ENCODE measurements at regions of chr1 and their contacts with region 1.

Region 1: GRCh38 chr1:184734980-184735379 is 19.7 kb downstream of the EDEM3 start:
- DNase-seq: no peak
- H3K4me3 ChIP-seq: no peak overlapping the region
- H3K27ac ChIP-seq: no peak overlapping the region
- H3K4me1 ChIP-seq: peaks cover 7% of the 10 kb centered on the region
- CTCF ChIP-seq: no peak

Region 2: DNA sequence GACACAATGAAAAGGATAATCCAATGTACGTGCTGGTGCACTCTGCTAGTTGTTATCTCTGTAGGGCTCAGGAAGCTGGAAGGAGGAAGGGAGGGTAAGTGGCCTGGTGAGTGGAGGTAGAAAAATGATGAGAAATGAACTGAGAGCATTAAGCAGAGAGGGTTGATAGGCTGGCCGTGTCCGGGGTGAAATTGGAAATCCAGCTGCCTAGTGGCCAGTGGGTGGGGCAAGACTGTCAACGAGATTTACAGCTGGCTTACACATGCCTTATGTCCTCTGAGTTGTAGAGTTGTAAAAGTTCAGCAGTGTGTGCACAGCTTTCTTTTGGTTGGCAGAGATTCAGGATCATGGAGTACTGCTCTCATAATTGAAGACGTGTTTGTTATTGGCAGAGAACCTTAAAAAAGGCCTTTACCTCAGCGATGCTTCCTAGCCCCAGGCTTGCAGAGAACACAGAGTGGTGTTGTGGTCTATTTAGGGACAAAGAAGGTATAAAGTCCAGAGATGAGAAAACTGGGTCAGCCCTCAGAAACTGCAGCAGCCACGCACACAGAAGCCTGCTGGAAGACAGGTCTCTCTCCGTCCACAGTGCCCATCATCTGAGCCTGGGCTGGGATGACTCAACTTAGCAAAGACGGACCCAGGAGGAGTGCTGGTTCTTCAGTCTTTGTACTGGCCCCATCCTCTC is 112.7 kb before region 1 on chr1:
- CTCF ChIA-PET with region 1: no interaction called
- POLR2A ChIA-PET with region 1: no interaction called
- intact Hi-C with region 1: no loop called
- DNase-seq: no peak
- H3K4me3 ChIP-seq: no peak overlapping the region
- H3K27ac ChIP-seq: no peak overlapping the region
- H3K4me1 ChIP-seq: no peaks in the 10 kb centered on the region
- CTCF ChIP-seq: no peak

Region 3: DNA sequence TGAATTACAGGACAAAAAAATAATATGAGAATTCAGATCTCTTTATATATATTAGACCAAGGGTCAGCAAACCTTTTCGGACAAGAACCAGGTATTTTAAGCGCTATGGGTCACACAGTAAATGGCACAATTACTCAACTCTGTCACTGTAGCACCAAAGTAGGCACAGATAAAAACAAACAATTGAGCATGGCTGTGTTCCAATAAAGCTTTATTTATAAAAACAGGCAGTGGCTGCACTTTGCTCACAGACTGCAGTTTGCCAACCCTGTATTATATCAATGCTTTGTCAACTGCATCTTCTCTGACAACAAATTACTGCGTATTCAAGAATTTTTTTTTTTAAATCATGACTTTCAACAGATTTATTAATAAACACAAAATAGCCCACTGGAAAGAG is 10.1 kb before region 1 on chr1:
- CTCF ChIA-PET with region 1: no interaction called
- POLR2A ChIA-PET with region 1: interaction called, 11 read pairs
- intact Hi-C with region 1: no loop called
- DNase-seq: no peak
- H3K4me3 ChIP-seq: no peak overlapping the region
- H3K27ac ChIP-seq: no peak overlapping the region
- H3K4me1 ChIP-seq: no peaks in the 10 kb centered on the region
- CTCF ChIP-seq: no peak

Region 4: GRCh38 chr1:184754476-184755225 is 19.7 kb after region 1 on chr1 and contains the start of gene EDEM3:
- CTCF ChIA-PET with region 1: no interaction called
- POLR2A ChIA-PET with region 1: interaction called, 17 read pairs
- intact Hi-C with region 1: no loop called
- DNase-seq: peak; percentile 98
- H3K4me3 ChIP-seq: peak within 1 kb of the TSS; percentile 81
- H3K27ac ChIP-seq: peak within 1 kb of the TSS; percentile 43
- H3K4me1 ChIP-seq: peaks cover 23% of the 10 kb centered on the region
- CTCF ChIP-seq: no peak
- total RNA-seq, gene EDEM3: 15.7 and 19.5 TPM in 2 replicates

Measured in OCI-LY7 (cell line).